Mucosa of descending colon (tissue), 3 donors: ENCODE measurements at regions of chr4 and their contacts with region 1.

Region 1: GRCh38 chr4:110344162-110344561 is 131.8 kb upstream of the ENPEP start:
- DNase-seq: peak in 1 of 3 donors; percentile 72
- ATAC-seq: peak; percentile 60
- H3K4me3 ChIP-seq: no peak overlapping the region
- H3K4me1 ChIP-seq: no peaks in the 10 kb centered on the region
- CTCF ChIP-seq: no peak

Region 2: DNA sequence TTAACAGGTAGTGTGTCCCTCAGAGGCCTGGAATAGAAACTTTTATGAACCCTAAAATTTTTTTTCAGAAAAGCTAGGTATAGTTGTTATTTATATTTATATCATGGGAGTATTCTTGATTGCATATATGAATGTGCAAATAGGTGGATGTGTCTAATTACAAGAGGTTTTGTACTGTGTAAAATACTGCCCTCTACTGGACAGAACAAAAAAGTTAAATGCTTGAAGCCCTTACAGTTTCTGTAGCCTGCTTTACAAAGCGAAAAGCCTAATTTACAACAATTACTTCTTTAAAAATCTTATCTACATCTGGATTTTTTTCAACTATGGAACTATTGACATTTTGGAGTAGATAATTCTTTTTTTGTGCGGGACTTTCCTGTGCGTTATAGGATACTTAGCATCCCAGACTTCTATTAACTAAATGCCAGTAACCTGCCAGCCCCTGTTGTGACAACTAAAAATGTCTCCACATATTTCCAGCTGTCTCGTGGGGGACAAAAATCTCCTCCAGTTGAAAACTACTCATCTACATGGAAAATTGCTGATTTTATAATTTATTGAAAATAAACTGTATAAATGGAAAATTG is 166.9 kb after region 1 on chr4:
- intact Hi-C with region 1: loop called in 1 of 2 experiments (anchors 5 kb)
- DNase-seq: no peak
- ATAC-seq: peak; percentile 75
- H3K4me3 ChIP-seq: no peak overlapping the region
- H3K4me1 ChIP-seq: peaks cover 2% of the 10 kb centered on the region
- CTCF ChIP-seq: peak; percentile 45